Activated naive CD4-positive, alpha-beta T cell treated with anti-CD3 and anti-CD28 coated beads for 36 hours (primary cell): ENCODE measurements at regions of chr13 and their contacts with region 1.

Region 1: DNA sequence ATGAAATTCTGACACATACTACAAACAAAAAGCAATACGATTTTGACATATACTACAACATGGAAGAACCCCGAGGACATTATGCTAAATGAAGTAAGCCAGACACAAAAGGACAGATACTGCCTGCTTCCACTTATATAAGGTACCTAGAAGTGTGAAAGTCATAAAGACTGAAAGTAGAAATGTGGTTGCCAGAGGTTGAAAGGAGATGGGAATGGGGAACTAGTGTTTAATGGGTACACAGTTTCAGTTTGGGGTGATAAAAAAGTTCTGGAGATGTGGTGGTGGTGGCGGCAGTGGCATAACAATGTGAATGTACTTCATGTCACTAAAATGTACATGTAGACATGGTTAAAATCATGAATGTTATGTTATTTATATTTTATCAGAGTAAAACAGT is 12.1 kb upstream of the NDFIP2 start:
- DNase-seq: no peak
- H3K4me3 Mint-ChIP-seq: no peak overlapping the region
- H3K27ac Mint-ChIP-seq: no peak overlapping the region
- H3K4me1 Mint-ChIP-seq: peaks cover 10% of the 10 kb centered on the region
- H3K27me3 Mint-ChIP-seq: no peaks in the 10 kb centered on the region

Region 2: DNA sequence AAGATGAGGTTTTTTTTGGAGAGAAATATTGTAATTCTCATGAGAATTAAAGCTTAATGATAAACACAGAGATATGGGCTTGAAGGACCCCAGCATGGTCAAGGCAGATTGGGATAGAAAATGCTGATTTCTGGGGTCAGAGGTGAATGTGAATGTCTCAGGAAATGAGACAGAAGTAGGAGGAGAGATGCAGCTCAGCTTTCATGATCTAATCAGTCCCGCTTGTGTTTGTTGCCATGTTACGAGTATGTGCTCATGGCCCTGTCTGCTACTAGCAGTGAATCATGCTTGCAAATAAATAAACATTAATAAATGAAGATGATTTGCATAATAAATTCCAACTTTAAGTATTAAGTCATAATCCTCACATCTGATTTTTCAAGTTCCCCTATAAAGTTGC is 10.9 kb before region 1 on chr13:
- CTCF ChIA-PET with region 1: interaction called, 10 read pairs
- intact Hi-C with region 1: no loop called
- DNase-seq: peak; percentile 32
- H3K4me3 Mint-ChIP-seq: no peak overlapping the region
- H3K27ac Mint-ChIP-seq: no peak overlapping the region
- H3K4me1 Mint-ChIP-seq: peaks cover 23% of the 10 kb centered on the region
- H3K27me3 Mint-ChIP-seq: no peaks in the 10 kb centered on the region